ENCODE measurements at regions of chr19 and their contacts with region 1.

Region 1: GRCh38 chr19:11137542-11138384 is 17.8 kb downstream of the SPC24 start:
- DNase-seq: peak; percentile 88 to 90
- ATAC-seq: peak; percentile 85
- H3K4me3 ChIP-seq: no peak overlapping the region
- H3K27ac ChIP-seq: peak overlapping the region; percentile 34 to 84
- H3K4me1 ChIP-seq: no peaks in the 10 kb centered on the region
- H3K27me3 ChIP-seq: no peaks in the 10 kb centered on the region

Region 2: GRCh38 chr19:11018179-11018578 is 119.6 kb before region 1 on chr19:
- intact Hi-C with region 1: no loop called
- DNase-seq: no peak
- ATAC-seq: no peak
- H3K4me3 ChIP-seq: no peak overlapping the region
- H3K27ac ChIP-seq: no peak overlapping the region
- H3K4me1 ChIP-seq: no peaks in the 10 kb centered on the region
- H3K27me3 ChIP-seq: no peaks in the 10 kb centered on the region

Region 3: GRCh38 chr19:11155373-11156120 is 17.8 kb after region 1 on chr19 and contains the start of gene SPC24:
- intact Hi-C with region 1: loop called in 1 of 2 experiments (anchors 1 kb)
- DNase-seq: peak; percentile 96 to 97
- ATAC-seq: peak; percentile 90
- H3K4me3 ChIP-seq: no peak within 1 kb of the TSS
- H3K27ac ChIP-seq: peak within 1 kb of the TSS in 1 of 2 donors; percentile 39
- H3K4me1 ChIP-seq: no peaks in the 10 kb centered on the region
- H3K27me3 ChIP-seq: no peaks in the 10 kb centered on the region
- total RNA-seq, gene SPC24: 1.1 to 2.9 TPM

Region 4: GRCh38 chr19:11203194-11204075 is 65.7 kb after region 1 on chr19:
- intact Hi-C with region 1: loop called (anchors 2 kb)
- DNase-seq: peak; percentile 91 to 94
- ATAC-seq: peak; percentile 83
- H3K4me3 ChIP-seq: no peak overlapping the region
- H3K27ac ChIP-seq: peak overlapping the region; percentile 71 to 83
- H3K4me1 ChIP-seq: no peaks in the 10 kb centered on the region
- H3K27me3 ChIP-seq: no peaks in the 10 kb centered on the region

Region 5: GRCh38 chr19:11446652-11447301 is 309.0 kb after region 1 on chr19:
- intact Hi-C with region 1: loop called in 1 of 2 experiments (anchors 10 kb)
- DNase-seq: peak; percentile 70 to 91
- ATAC-seq: peak; percentile 72
- H3K4me3 ChIP-seq: no peak overlapping the region
- H3K27ac ChIP-seq: no peak overlapping the region
- H3K4me1 ChIP-seq: no peaks in the 10 kb centered on the region
- H3K27me3 ChIP-seq: no peaks in the 10 kb centered on the region